Activated CD4-positive, alpha-beta T cell treated with anti-CD3 and anti-CD28 coated beads, Interleukin-2, amount 10 ng/mL, durations not matched to agents 24 days and 14 days (primary cell): ENCODE measurements at regions of chrX and their contacts with region 1.

Region 1: GRCh38 chrX:4547213-4547836 is 833.9 kb upstream of the PRKX start:
- DNase-seq: peak; percentile 71
- H3K4me3 Mint-ChIP-seq: no peak overlapping the region
- H3K27ac Mint-ChIP-seq: no peak overlapping the region
- H3K4me1 Mint-ChIP-seq: no peaks in the 10 kb centered on the region
- H3K27me3 Mint-ChIP-seq: no peaks in the 10 kb centered on the region

Region 2: DNA sequence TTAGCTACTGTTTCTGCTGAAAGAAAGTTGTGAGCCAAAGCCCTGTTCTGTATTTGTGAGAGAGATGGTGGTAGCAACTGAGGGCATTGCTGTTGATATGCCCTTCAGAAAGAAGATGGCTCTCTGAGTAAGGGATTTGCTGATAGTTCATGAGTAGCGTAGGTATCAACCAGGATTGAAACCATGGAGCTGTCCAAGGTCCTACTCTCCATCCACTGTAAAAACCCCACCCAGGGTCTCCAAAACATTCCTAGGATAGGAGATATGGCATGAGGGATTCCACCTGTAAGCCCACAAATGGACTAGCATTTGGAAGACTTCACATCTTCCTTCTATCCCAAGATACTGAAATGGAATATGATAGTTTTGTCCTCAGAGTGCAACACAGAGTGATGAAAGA is 556.8 kb before region 1 on chrX:
- intact Hi-C with region 1: no loop called
- DNase-seq: no peak
- H3K4me3 Mint-ChIP-seq: no peak overlapping the region
- H3K27ac Mint-ChIP-seq: no peak overlapping the region
- H3K4me1 Mint-ChIP-seq: no peaks in the 10 kb centered on the region
- H3K27me3 Mint-ChIP-seq: no peaks in the 10 kb centered on the region

Region 3: GRCh38 chrX:5113128-5113527 is 565.8 kb after region 1 on chrX:
- intact Hi-C with region 1: loop called (anchors 5 kb)
- DNase-seq: no peak
- H3K4me3 Mint-ChIP-seq: no peak overlapping the region
- H3K27ac Mint-ChIP-seq: no peak overlapping the region
- H3K4me1 Mint-ChIP-seq: no peaks in the 10 kb centered on the region
- H3K27me3 Mint-ChIP-seq: no peaks in the 10 kb centered on the region